HepG2 (cell line): ENCODE measurements at regions of chr22 and their contacts with region 1.

Region 1: GRCh38 chr22:49789289-49790141 is 38.2 kb downstream of the BRD1 start:
- DNase-seq: peak; percentile 10
- ATAC-seq: peak; percentile 58
- H3K4me3 ChIP-seq: no peak overlapping the region
- H3K27ac ChIP-seq: no peak overlapping the region
- H3K4me1 ChIP-seq: peaks cover 27% of the 10 kb centered on the region
- H3K27me3 ChIP-seq: no peaks in the 10 kb centered on the region
- CTCF ChIP-seq: no peak
- EP300 ChIP-seq: no peak
- POLR2A ChIP-seq: no peak
- RAD21 ChIP-seq: no peak

Region 2: GRCh38 chr22:49724893-49725474 is 64.5 kb before region 1 on chr22:
- CTCF ChIA-PET with region 1: no interaction called
- POLR2A ChIA-PET with region 1: no interaction called
- in situ Hi-C with region 1: no loop called
- intact Hi-C with region 1: no loop called
- DNase-seq: peak; percentile 15
- ATAC-seq: peak; percentile 96
- H3K4me3 ChIP-seq: no peak overlapping the region
- H3K27ac ChIP-seq: no peak overlapping the region
- H3K4me1 ChIP-seq: no peaks in the 10 kb centered on the region
- H3K27me3 ChIP-seq: peaks cover 17 to 73% of the 10 kb centered on the region in 2 experiments
- CTCF ChIP-seq: peak; percentile 86
- EP300 ChIP-seq: no peak
- POLR2A ChIP-seq: no peak
- RAD21 ChIP-seq: peak; percentile 65

Region 3: GRCh38 chr22:49767355-49768062 is 22.0 kb before region 1 on chr22:
- CTCF ChIA-PET with region 1: no interaction called
- POLR2A ChIA-PET with region 1: no interaction called
- in situ Hi-C with region 1: no loop called
- intact Hi-C with region 1: no loop called
- DNase-seq: peak; percentile 58
- ATAC-seq: peak; percentile 18
- H3K4me3 ChIP-seq: no peak overlapping the region
- H3K27ac ChIP-seq: no peak overlapping the region
- H3K4me1 ChIP-seq: no peaks in the 10 kb centered on the region
- H3K27me3 ChIP-seq: peaks cover 0 to 1% of the 10 kb centered on the region in 2 experiments; a peak in 2 of 5 replicates
- CTCF ChIP-seq: peak; percentile 87
- EP300 ChIP-seq: no peak
- POLR2A ChIP-seq: no peak
- RAD21 ChIP-seq: peak; percentile 75

Region 4: DNA sequence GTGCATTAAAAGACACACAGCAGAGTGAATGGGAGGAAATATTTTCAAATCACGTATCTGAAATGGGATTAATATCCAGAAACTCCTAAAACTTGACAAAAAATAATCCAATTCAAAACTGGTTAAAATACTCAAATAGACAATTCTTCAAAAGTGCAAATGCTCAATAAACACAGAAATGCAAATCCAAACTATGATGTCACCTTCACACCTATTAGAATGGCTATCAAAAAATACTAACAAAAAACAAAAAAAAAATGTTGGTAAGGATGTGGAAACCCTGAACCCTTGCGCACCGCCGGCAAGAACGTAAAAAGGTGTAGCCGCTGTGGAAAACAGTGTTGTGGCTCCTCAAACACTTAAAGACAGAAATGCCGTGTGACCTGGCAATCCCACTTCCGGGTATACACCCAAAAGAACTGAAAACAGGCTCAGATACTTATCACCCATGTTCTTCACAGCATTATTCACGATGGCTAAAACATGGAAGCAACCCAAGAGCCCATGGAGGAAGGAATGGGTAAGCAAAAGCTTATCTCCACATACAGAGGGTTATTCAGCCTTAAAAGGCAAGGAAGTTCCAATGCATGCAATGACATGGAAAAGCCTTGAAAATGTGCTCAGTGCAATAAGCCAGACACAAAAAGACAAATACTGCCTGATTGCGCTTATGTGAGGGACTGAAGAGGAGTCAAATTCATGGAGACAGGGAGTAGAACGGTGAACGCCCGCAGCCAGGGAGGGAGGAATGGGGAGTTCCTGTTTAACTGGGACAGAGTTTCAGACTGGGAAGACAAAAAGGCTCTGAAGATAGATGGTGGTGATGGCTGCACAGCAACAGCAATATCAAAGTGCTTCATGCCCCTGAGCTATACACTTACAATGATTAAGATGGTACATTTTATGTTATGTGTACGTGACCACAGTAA is 18.5 kb after region 1 on chr22:
- CTCF ChIA-PET with region 1: no interaction called
- POLR2A ChIA-PET with region 1: no interaction called
- in situ Hi-C with region 1: no loop called
- intact Hi-C with region 1: no loop called
- DNase-seq: no peak
- ATAC-seq: no peak
- H3K4me3 ChIP-seq: no peak overlapping the region
- H3K27ac ChIP-seq: no peak overlapping the region
- H3K4me1 ChIP-seq: peaks cover 6% of the 10 kb centered on the region; the same call in 1 of the 2 replicates
- H3K27me3 ChIP-seq: no peaks in the 10 kb centered on the region
- CTCF ChIP-seq: no peak
- EP300 ChIP-seq: no peak
- POLR2A ChIP-seq: no peak
- RAD21 ChIP-seq: no peak

Region 5: DNA sequence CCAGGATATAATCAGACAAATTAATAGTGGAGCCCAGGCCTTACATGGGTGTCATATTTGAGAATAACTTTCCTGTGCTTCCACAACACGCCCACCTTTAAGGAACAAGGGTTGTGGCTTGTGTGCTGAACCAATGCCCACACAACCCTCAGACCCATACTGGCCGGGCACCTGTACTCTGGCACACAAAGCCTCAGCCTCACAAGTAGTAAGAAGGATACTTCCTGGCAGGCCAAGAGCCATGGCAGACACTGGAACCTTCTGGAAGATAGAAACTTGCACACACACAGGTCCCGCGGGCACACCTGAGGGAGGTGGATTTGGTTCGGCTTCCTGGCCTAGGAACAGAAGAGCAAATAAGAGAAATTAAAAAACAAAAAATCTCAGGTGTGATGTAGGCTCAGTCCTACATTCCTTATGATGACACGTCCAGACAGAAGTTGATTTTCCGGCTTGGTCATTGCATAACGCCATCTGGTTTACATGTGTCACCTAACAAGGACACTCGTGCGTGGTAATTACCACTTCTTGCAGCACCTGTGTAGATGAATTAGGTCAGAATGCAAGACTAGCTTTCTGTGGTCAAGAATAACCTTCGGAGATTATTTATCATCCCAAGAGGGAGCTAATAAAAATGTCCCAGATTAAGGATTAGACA is 44.0 kb after region 1 on chr22:
- CTCF ChIA-PET with region 1: no interaction called
- POLR2A ChIA-PET with region 1: no interaction called
- in situ Hi-C with region 1: no loop called
- intact Hi-C with region 1: loop called (anchors 1 kb)
- DNase-seq: no peak
- ATAC-seq: no peak
- H3K4me3 ChIP-seq: no peak overlapping the region
- H3K27ac ChIP-seq: no peak overlapping the region
- H3K4me1 ChIP-seq: peaks cover 17% of the 10 kb centered on the region
- H3K27me3 ChIP-seq: peaks cover 0 to 32% of the 10 kb centered on the region in 2 experiments
- CTCF ChIP-seq: no peak
- EP300 ChIP-seq: no peak
- POLR2A ChIP-seq: no peak
- RAD21 ChIP-seq: no peak

Region 6: GRCh38 chr22:49951000-49951677 is 161.6 kb after region 1 on chr22:
- CTCF ChIA-PET with region 1: no interaction called
- POLR2A ChIA-PET with region 1: no interaction called
- in situ Hi-C with region 1: no loop called
- intact Hi-C with region 1: no loop called
- DNase-seq: no peak
- ATAC-seq: no peak
- H3K4me3 ChIP-seq: peak overlapping the region; percentile 54 to 77 (median 56); a peak in 5 of 6 replicates
- H3K27ac ChIP-seq: peak overlapping the region; percentile 68
- H3K4me1 ChIP-seq: peaks cover 95% of the 10 kb centered on the region
- H3K27me3 ChIP-seq: no peaks in the 10 kb centered on the region
- CTCF ChIP-seq: no peak
- EP300 ChIP-seq: no peak
- POLR2A ChIP-seq: no peak
- RAD21 ChIP-seq: no peak